Dendritic cell treated with granulocyte-macrophage colony-stimulating factor and Interleukin-4, amounts not matched to agents 40 ng/mL and 50 ng/mL, for 4 days (primary cell): ENCODE measurements at regions of chr11 and their contacts with region 1.

Region 1: GRCh38 chr11:85941380-85941973 is 86.3 kb downstream of the CCDC83 start:
- H3K4me3 Mint-ChIP-seq: no peak overlapping the region
- H3K27ac Mint-ChIP-seq: no peak overlapping the region
- H3K4me1 Mint-ChIP-seq: peaks cover 14% of the 10 kb centered on the region
- H3K27me3 Mint-ChIP-seq: no peaks in the 10 kb centered on the region

Region 2: DNA sequence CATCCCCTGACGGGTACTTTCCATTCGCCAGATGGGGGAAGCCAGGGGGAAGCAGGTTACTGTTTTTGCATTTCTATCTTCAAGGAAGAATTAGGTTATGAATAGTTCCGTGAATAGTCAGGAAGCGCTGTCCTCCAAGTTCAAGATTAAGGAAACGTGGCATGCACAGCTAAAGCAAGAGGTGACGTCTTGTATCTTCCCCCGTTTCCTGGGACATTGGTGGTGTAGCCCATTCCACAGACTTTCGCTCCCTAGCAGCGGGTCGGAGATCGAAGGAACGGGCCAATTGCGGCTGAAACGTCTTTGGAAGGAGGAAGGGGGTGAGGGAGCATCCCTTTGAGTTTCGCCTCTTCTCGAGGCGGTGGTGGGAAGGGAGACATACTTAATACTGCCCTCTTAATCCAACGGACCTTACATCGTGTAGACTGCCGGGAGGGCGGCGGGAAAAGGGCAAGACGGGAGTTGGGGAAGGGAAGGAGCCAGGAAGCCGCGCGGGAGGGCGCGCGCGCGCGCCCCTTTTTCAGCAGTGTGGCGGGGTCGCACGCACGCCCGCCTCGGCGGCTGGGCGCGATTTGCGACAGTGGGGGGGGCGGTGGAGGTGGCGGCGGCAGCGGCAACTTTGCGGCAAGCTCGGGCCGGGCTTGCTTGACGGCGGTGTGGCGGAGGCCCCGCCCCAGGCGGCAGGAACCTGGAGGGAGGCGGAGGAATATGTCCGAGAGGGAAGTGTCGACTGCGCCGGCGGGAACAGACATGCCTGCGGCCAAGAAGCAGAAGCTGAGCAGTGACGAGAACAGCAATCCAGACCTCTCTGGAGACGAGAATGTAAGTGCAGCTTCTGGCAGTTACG is 303.3 kb after region 1 on chr11 and contains the start of gene EED:
- intact Hi-C with region 1: loop called (anchors 10 kb)
- H3K4me3 Mint-ChIP-seq: no peak within 1 kb of the TSS
- H3K27ac Mint-ChIP-seq: no peak within 1 kb of the TSS
- H3K4me1 Mint-ChIP-seq: peaks cover 26% of the 10 kb centered on the region
- H3K27me3 Mint-ChIP-seq: no peaks in the 10 kb centered on the region

Region 3: DNA sequence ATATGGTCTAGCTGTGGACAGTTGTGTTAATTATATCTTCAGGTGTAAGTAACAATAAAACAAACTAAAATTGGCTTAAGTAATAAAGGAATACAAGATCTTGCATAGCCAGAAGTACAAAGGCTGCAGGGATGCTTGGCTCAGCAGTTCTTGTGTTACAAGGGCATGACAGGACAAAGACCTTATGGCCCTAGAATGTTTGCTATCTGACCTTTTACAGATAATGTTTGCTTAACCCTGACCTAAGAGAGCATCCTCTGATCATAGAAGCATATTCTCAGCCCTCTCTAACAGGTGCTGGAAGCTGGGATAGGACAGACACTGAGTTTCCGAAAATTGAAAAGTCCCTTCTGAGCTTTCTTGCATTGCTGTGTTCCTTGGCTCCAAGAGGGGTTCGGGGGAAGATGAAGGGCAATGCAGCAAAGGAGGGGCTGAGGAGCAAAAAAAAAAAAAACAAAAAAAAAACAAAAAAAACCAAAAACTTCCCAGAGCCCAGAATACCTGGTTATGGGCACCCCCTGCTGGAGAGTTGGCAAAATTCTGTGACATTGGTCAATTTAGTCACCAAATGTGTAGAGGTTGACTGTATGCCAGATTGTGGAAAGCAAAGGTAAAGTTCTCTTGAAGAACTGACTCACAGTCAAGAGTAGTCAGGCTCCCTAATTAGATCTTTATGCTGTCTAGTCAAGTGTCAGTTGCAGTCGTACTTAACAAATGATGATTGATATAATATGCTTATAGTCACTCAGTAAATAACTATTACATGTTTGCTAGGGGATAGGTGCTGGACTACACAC is 350.2 kb after region 1 on chr11:
- intact Hi-C with region 1: loop called (anchors 5 kb)
- H3K4me3 Mint-ChIP-seq: no peak overlapping the region
- H3K27ac Mint-ChIP-seq: no peak overlapping the region
- H3K4me1 Mint-ChIP-seq: no peaks in the 10 kb centered on the region
- H3K27me3 Mint-ChIP-seq: peaks cover 2% of the 10 kb centered on the region